ENCODE measurements at regions of chr2 and their contacts with region 1.

Region 1: GRCh38 chr2:207625018-207625907 is at the start of gene METTL21A:
- DNase-seq: peak; percentile 98
- CTCF ChIP-seq: peak; percentile 72

Region 2: GRCh38 chr2:207584952-207585351 is 40.3 kb before region 1 on chr2:
- in situ Hi-C with region 1: no loop called
- DNase-seq: no peak
- CTCF ChIP-seq: no peak

Region 3: GRCh38 chr2:208033758-208034502 is 408.7 kb after region 1 on chr2:
- in situ Hi-C with region 1: loop called (anchors 10 kb)
- DNase-seq: peak; percentile 64
- CTCF ChIP-seq: peak; percentile 67